ENCODE measurements at regions of chr1 and their contacts with region 1.

Region 1: GRCh38 chr1:186315570-186315969 is 59.5 kb downstream of the TPR start:
- DNase-seq: no peak
- ATAC-seq: no peak
- H3K4me3 ChIP-seq: no peak overlapping the region
- H3K4me1 ChIP-seq: no peaks in the 10 kb centered on the region
- CTCF ChIP-seq: no peak

Region 2: DNA sequence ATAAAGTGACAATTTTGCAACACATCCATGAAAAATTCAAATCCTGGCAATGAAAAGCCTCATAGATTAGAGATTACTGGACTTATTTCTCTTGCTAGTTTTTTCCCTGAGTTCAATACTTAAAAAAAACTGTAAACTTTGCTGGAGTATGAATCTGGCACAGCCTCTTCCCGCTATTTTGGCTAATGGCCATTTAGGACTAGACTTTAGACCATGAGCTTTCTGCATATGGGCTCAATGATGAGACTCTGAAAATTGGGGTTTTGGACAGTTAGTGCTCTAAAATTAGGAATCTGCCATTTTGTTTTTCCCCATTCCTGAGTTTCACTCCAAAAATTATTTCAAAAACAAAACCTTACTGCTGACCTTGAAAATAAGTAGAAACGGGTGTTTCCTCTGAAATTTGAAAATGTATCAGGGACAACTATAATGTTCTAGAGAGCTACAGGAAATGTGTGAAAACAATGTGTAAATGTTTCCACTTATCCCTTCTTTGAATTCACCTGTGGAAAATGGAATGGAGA is 443.9 kb before region 1 on chr1:
- intact Hi-C with region 1: no loop called
- DNase-seq: no peak
- ATAC-seq: no peak
- H3K4me3 ChIP-seq: no peak overlapping the region
- H3K4me1 ChIP-seq: no peaks in the 10 kb centered on the region
- CTCF ChIP-seq: no peak

Region 3: DNA sequence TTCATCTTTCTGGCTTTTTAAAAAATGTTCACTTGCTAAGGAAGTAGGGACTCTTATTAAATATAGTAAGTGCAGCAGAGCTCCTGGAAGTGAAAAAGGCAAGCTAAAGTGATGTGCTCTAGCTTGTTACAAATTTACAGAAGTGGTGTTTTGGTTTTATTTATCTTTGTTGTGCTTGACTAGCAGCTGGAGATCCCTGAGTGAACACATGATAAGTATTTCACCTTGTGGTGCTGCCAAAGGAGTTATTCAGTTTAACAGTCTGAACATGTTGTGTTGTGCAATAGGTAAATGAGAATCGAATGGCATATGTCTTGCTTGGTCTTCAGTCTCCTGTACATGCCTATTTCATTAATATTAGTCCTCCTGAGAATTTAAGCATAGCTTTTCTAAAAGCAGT is 256.3 kb before region 1 on chr1:
- intact Hi-C with region 1: no loop called
- DNase-seq: no peak
- ATAC-seq: no peak
- H3K4me3 ChIP-seq: no peak overlapping the region
- H3K4me1 ChIP-seq: no peaks in the 10 kb centered on the region
- CTCF ChIP-seq: no peak

Region 4: GRCh38 chr1:186363891-186364290 is 48.3 kb after region 1 on chr1:
- intact Hi-C with region 1: loop called in 1 of 2 experiments (anchors 10 kb)
- DNase-seq: no peak
- ATAC-seq: no peak
- H3K4me3 ChIP-seq: no peak overlapping the region
- H3K4me1 ChIP-seq: no peaks in the 10 kb centered on the region
- CTCF ChIP-seq: no peak

Measured in mucosa of descending colon (tissue), 3 donors.